Thyroid gland (tissue), 4 donors: ENCODE measurements at regions of chr7 and their contacts with region 1.

Region 1: GRCh38 chr7:115851291-115851690 is 179.3 kb downstream of the TFEC start:
- DNase-seq: no peak
- H3K4me3 ChIP-seq: no peak overlapping the region
- H3K27ac ChIP-seq: no peak overlapping the region
- H3K4me1 ChIP-seq: no peaks in the 10 kb centered on the region
- H3K27me3 ChIP-seq: no peaks in the 10 kb centered on the region
- CTCF ChIP-seq: peak in 3 of 6 experiments; percentile 26 to 45 (median 34)
- POLR2A ChIP-seq: no peak

Region 2: GRCh38 chr7:115805458-115805857 is 45.8 kb before region 1 on chr7:
- intact Hi-C with region 1: no loop called
- DNase-seq: no peak
- H3K4me3 ChIP-seq: no peak overlapping the region
- H3K27ac ChIP-seq: no peak overlapping the region
- H3K4me1 ChIP-seq: no peaks in the 10 kb centered on the region
- H3K27me3 ChIP-seq: no peaks in the 10 kb centered on the region
- CTCF ChIP-seq: no peak
- POLR2A ChIP-seq: no peak

Region 3: DNA sequence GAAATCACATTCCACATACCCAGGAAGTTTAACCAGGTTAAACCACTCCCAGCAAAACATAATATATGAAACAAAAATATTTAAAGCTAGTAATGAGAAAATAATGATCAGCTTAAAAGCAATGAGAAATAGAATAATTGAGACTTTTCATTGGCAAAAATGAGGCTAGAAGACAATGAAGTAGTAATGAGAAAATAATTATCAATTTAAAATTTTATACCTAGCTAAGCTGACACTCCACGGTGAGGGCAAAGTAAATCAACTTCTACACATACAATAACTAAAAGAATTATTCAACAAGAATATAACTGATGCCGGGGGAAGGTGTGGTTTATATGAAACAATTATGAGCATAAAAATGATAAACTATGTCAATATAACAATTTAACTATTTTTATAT is 276.8 kb after region 1 on chr7:
- intact Hi-C with region 1: loop called (anchors 5 kb)
- DNase-seq: no peak
- H3K4me3 ChIP-seq: no peak overlapping the region
- H3K27ac ChIP-seq: no peak overlapping the region
- H3K4me1 ChIP-seq: no peaks in the 10 kb centered on the region
- H3K27me3 ChIP-seq: no peaks in the 10 kb centered on the region
- CTCF ChIP-seq: no peak
- POLR2A ChIP-seq: no peak